ENCODE measurements at regions of chr1 and their contacts with region 1.

Region 1: DNA sequence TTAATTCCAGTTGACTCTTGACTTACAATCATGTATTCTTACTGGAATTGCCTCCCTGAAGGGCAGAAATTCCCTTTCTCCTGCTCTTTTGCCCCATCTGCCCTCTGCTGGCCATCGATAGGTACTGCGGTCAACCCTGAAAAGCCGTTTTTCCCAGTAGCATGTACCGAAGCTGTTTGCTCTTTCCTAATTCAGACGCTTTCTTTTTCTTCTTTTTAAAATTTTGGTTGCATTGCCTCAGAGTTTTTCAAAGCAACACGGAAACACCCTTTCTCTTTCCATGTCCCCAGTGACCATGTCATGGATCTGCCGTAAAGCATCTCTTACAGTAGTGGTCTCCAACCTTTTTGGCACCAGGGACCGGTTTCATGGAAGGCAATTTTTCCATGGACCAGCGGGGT is 164.2 kb upstream of the C1orf21 start:
- DNase-seq: peak; percentile 48
- H3K4me3 ChIP-seq: no peak overlapping the region
- H3K27ac ChIP-seq: no peak overlapping the region
- H3K4me1 ChIP-seq: no peaks in the 10 kb centered on the region
- H3K27me3 ChIP-seq: no peaks in the 10 kb centered on the region
- CTCF ChIP-seq: peak; percentile 91 to 94

Region 2: GRCh38 chr1:183655562-183656075 is 567.0 kb before region 1 on chr1:
- CTCF ChIA-PET with region 1: no interaction called
- dilution Hi-C with region 1: no loop called
- in situ Hi-C with region 1: no loop called
- intact Hi-C with region 1: loop called (anchors 2 kb)
- DNase-seq: peak; percentile 56
- H3K4me3 ChIP-seq: no peak overlapping the region
- H3K27ac ChIP-seq: no peak overlapping the region
- H3K4me1 ChIP-seq: peaks cover 4% of the 10 kb centered on the region
- H3K27me3 ChIP-seq: no peaks in the 10 kb centered on the region
- CTCF ChIP-seq: peak; percentile 75 to 84

Region 3: GRCh38 chr1:183711741-183712361 is 510.8 kb before region 1 on chr1:
- CTCF ChIA-PET with region 1: no interaction called
- dilution Hi-C with region 1: no loop called
- in situ Hi-C with region 1: no loop called
- intact Hi-C with region 1: no loop called
- DNase-seq: no peak
- H3K4me3 ChIP-seq: no peak overlapping the region
- H3K27ac ChIP-seq: no peak overlapping the region
- H3K4me1 ChIP-seq: no peaks in the 10 kb centered on the region
- H3K27me3 ChIP-seq: no peaks in the 10 kb centered on the region
- CTCF ChIP-seq: no peak

Region 4: GRCh38 chr1:184082541-184083415 is 139.9 kb before region 1 on chr1:
- CTCF ChIA-PET with region 1: no interaction called
- dilution Hi-C with region 1: no loop called
- in situ Hi-C with region 1: loop called (anchors 5 kb)
- intact Hi-C with region 1: no loop called
- DNase-seq: no peak
- H3K4me3 ChIP-seq: no peak overlapping the region
- H3K27ac ChIP-seq: no peak overlapping the region
- H3K4me1 ChIP-seq: no peaks in the 10 kb centered on the region
- H3K27me3 ChIP-seq: no peaks in the 10 kb centered on the region
- CTCF ChIP-seq: no peak

Region 5: DNA sequence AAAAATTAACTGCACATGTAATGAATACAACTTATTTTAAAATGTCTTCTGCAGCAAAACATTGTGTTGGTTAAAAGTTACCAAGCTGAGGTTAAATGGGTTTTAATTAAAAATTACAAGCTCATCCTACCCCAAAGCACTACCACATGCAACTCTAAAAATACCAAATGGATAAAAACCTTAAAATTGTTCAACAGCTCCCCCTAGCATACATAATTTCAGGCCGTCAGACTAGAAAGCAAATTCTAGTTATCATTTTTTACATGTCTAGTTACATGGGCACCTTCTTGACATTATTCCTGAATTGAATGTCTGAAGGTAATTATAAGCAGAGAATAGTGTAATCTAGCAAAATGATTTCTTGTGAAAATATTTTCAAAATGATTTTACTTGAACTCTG is 340.7 kb after region 1 on chr1:
- CTCF ChIA-PET with region 1: interaction called, 3 read pairs
- dilution Hi-C with region 1: no loop called
- in situ Hi-C with region 1: no loop called
- intact Hi-C with region 1: loop called (anchors 1 kb)
- DNase-seq: peak; percentile 16
- H3K4me3 ChIP-seq: no peak overlapping the region
- H3K27ac ChIP-seq: no peak overlapping the region
- H3K4me1 ChIP-seq: peaks cover 14% of the 10 kb centered on the region
- H3K27me3 ChIP-seq: no peaks in the 10 kb centered on the region
- CTCF ChIP-seq: peak; percentile 46 to 60

Measured in mammary epithelial cell (primary cell).